WTC11 (cell line): ENCODE measurements at regions of chr7 and their contacts with region 1.

Region 1: DNA sequence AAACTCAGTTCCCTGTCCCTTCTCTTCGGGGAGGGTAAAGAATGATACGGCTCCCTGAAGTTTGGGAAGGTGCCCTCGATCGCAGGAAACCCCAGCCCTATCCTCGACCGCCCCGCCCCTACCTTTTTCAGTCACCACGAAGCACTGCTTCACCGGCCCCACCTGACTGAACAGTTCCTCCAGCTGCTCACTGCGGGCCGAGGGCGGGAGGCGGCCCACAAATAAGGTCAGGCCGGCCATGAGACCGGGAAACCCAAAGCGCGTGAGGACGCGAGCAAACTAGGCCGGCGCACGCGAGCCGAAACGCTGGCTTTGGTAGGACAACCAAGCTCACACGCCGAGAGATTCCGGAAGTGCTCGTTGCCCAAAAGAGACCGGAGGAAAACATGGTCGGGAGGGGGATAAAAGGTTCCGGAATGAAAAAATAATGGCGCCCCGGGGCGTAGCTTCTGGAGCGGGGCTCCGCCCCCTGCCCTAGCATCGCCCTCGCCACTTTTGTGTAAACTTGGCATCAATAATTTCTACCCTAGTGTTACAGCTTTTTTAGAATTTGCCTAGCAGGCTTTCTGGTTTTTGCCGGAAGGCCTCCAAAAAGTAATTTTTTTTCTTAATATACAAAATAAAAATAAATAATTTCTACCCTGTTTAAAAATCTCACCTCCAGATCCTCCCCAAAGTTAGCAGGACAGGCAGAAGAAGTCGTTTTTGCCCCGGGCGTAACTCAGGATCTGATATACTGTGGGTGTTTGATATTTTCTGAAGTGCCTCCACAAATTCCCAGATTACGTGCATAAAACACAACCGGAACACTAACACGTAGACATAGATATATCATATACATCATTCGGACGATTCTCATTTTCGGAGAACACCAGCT is at the start of gene RBM28:
- DNase-seq: peak; percentile 81
- ATAC-seq: peak; percentile 92
- H3K4me3 Mint-ChIP-seq: peak within 1 kb of the TSS; percentile 91
- H3K27ac Mint-ChIP-seq: peak within 1 kb of the TSS; percentile 91
- H3K4me1 Mint-ChIP-seq: peaks cover 11% of the 10 kb centered on the region
- H3K27me3 Mint-ChIP-seq: peaks cover 20% of the 10 kb centered on the region
- CTCF ChIP-seq: no peak
- total RNA-seq, gene RBM28: 51.5 to 66.1 TPM (median 56.2 TPM) in 3 replicates

Region 2: DNA sequence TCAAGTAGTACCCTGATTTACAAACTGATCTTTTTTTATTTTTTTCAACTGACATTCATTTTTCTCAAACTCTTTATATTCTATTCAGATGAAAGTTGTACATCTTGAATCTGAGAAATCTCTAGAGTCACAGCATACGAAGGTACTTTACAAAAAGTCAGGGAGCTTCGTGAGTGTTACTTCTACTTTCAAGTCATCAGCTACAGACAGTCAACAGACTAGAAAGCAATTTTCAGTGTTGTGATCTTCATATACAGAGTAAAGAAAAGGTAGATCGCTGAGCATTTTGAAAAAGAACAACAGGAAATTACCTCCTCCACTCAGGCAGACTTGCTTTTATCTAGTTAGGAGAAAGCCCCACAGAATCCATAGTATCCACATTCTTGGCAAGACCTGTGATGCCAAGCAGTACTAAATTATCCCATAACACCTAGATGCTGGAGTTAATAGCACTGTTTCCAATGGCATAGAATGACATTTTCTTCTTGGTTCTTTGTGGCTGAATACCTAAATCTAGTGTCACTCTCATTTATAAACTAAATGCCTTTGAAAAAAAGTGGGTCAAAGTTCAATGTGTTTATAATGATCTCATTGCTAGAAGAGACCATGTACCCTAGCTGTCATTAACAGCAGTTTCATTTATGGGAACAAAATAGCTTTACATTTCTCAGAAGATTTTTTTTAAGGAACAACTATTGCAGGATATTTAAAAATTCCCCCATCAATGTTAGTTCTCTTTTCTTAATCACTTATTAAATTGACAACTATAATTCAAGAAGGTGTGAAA is 939.3 kb before region 1 on chr7:
- CTCF ChIA-PET with region 1: no interaction called
- POLR2A ChIA-PET with region 1: no interaction called
- DNase-seq: no peak
- ATAC-seq: no peak
- H3K4me3 Mint-ChIP-seq: no peak overlapping the region
- H3K27ac Mint-ChIP-seq: no peak overlapping the region
- H3K4me1 Mint-ChIP-seq: no peaks in the 10 kb centered on the region
- H3K27me3 Mint-ChIP-seq: peaks cover 45% of the 10 kb centered on the region
- CTCF ChIP-seq: no peak

Region 3: DNA sequence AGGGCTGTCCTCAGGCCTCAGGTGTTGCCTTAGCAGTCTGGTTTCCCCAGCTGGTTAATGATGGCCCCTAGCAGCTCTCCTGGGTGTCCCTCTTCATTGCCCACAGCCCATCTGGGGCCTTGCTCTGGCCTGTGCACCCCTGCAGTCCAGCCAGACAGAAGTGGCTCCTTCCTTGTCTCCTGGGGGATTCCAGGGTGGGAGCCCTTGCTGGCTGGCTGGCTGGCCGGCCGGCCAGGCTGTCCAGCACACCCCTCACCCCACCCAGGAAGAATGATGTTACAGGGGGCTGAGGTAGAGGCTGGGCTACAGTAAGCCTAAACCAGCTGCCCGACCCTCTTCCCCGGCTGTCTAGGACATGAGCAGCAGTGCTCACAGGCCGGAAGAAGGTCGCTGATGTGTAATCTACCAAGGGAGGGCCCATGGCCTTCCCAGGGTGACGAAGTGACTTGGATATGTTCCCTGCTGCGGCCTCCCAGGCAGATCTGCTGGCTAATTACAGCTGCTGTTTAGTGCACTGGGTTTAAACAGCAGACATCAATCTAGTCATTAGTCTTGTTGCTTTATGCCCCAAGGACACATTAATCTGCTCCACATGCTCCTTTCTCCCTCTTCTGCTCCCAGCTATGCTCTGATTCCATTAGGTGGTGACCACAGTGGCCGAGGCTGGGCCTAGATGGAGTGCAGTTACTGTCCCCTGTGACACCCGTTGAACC is 258.7 kb before region 1 on chr7:
- CTCF ChIA-PET with region 1: no interaction called
- POLR2A ChIA-PET with region 1: no interaction called
- DNase-seq: no peak
- ATAC-seq: no peak
- H3K4me3 Mint-ChIP-seq: no peak overlapping the region
- H3K27ac Mint-ChIP-seq: no peak overlapping the region
- H3K4me1 Mint-ChIP-seq: no peaks in the 10 kb centered on the region; the same call in 1 of the 2 replicates
- H3K27me3 Mint-ChIP-seq: no peaks in the 10 kb centered on the region
- CTCF ChIP-seq: no peak

Region 4: GRCh38 chr7:128361411-128362379 is 17.9 kb after region 1 on chr7 and contains the start of gene PRRT4:
- CTCF ChIA-PET with region 1: interaction called, 13 read pairs
- POLR2A ChIA-PET with region 1: no interaction called
- DNase-seq: peak; percentile 38
- ATAC-seq: peak; percentile 40
- H3K4me3 Mint-ChIP-seq: peak within 1 kb of the TSS; percentile 74
- H3K27ac Mint-ChIP-seq: no peak within 1 kb of the TSS
- H3K4me1 Mint-ChIP-seq: peaks cover 23% of the 10 kb centered on the region
- H3K27me3 Mint-ChIP-seq: peaks cover 94% of the 10 kb centered on the region
- CTCF ChIP-seq: no peak
- total RNA-seq, gene PRRT4: 0.92 to 1.5 TPM (median 1.2 TPM) in 3 replicates

Region 5: DNA sequence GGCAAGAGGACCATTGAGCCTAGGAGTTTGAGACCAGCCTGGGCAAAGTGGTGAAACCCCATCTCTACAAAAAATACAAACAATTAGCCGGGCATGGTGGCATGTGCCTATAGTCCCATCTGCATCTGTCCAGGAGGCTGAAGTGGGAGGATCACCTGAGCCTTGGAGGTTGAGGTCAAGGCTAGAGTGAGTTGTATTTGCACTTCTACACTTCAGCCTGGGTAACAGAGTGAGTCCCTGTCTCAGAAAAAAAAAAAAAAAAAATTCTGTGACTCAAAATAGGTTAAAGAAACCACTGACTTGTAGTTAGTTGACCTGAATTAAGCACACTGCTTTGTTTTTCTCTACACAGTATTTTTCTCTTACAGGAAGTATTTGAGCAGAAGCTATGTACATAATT is 207.1 kb after region 1 on chr7:
- CTCF ChIA-PET with region 1: no interaction called
- POLR2A ChIA-PET with region 1: no interaction called
- DNase-seq: no peak
- ATAC-seq: no peak
- H3K4me3 Mint-ChIP-seq: no peak overlapping the region
- H3K27ac Mint-ChIP-seq: no peak overlapping the region
- H3K4me1 Mint-ChIP-seq: no peaks in the 10 kb centered on the region
- H3K27me3 Mint-ChIP-seq: no peaks in the 10 kb centered on the region
- CTCF ChIP-seq: no peak